ENCODE measurements at regions of chr4 and their contacts with region 1.

Region 1: GRCh38 chr4:141109983-141110382 is 23.3 kb downstream of the RNF150 start:
- DNase-seq: no peak
- ATAC-seq: no peak
- H3K4me3 ChIP-seq: no peak overlapping the region
- H3K27ac ChIP-seq: no peak overlapping the region
- H3K4me1 ChIP-seq: no peaks in the 10 kb centered on the region
- H3K27me3 ChIP-seq: no peaks in the 10 kb centered on the region
- CTCF ChIP-seq: no peak

Region 2: GRCh38 chr4:140568507-140569306 is 541.3 kb before region 1 on chr4 and contains the start of gene UCP1:
- intact Hi-C with region 1: loop called in 1 of 3 experiments (anchors 10 kb)
- DNase-seq: peak; percentile 25 to 78 (median 41)
- ATAC-seq: peak; percentile 76 to 94 (median 88)
- H3K4me3 ChIP-seq: peak within 1 kb of the TSS; percentile 23 to 66 (median 34)
- H3K27ac ChIP-seq: no peak within 1 kb of the TSS
- H3K4me1 ChIP-seq: peaks cover 0 to 3% (median 0%) of the 10 kb centered on the region in 3 donors
- H3K27me3 ChIP-seq: no peaks in the 10 kb centered on the region
- CTCF ChIP-seq: no peak
- total RNA-seq, gene UCP1: not detected

Measured in pancreas (tissue), 10 donors.